Activated CD4-positive, alpha-beta T cell treated with anti-CD3 and anti-CD28 coated beads for 36 hours (primary cell): ENCODE measurements at regions of chr5 and their contacts with region 1.

Region 1: DNA sequence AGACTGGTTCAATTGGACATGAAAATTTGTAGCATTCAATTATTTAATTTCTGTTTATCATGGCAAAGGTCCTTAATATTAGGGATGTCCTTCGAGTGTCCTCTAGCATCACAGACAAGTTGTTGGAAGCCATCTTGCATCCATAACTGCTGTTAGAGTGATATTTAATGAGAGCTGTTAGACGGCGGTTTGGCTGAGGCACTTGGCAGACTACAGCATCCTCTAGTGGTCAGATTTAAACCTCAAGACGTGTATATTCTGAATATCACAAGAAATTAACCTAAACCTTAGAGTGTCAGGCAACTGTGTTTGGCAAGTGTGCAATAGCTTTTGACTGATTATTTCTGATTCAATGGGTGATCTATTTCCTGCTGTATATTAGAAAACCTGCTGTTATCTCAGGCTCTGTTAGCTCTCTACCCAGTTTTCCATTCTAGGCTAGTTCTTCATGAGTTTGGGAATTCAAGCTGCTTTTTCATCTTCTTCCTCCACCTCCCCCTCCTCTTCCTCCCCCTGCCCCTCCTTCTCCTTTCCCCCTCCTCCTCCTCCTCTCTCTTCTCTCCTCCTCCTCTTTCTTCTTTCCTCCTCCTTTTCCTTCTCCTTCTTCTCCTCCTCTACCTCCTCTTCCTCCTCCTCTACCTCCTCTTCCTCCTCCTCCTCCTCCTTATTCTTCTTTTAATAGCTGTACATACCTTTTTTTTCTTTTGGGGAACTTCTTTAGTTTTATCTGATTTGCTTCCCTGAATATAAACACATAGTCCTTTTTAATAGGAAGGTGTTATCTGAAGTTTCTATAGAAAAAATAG is 8.6 kb downstream of the SPINK1 start:
- DNase-seq: peak; percentile 56
- ATAC-seq: peak; percentile 80
- H3K4me3 Mint-ChIP-seq: no peak overlapping the region
- H3K27ac Mint-ChIP-seq: no peak overlapping the region
- H3K4me1 Mint-ChIP-seq: no peaks in the 10 kb centered on the region
- H3K27me3 Mint-ChIP-seq: peaks cover 2% of the 10 kb centered on the region

Region 2: GRCh38 chr5:147453875-147454814 is 368.7 kb before region 1 on chr5:
- CTCF ChIA-PET with region 1: interaction called, 3 read pairs
- POLR2A ChIA-PET with region 1: no interaction called
- intact Hi-C with region 1: loop called (anchors 1 to 5 kb)
- DNase-seq: peak; percentile 85
- ATAC-seq: peak; percentile 82
- H3K4me3 Mint-ChIP-seq: peak overlapping the region; percentile 69
- H3K27ac Mint-ChIP-seq: no peak overlapping the region
- H3K4me1 Mint-ChIP-seq: peaks cover 9% of the 10 kb centered on the region
- H3K27me3 Mint-ChIP-seq: peaks cover 72% of the 10 kb centered on the region

Region 3: GRCh38 chr5:147628058-147628895 is 194.6 kb before region 1 on chr5:
- CTCF ChIA-PET with region 1: interaction called, 108 read pairs
- POLR2A ChIA-PET with region 1: interaction called, 4 read pairs
- intact Hi-C with region 1: loop called (anchors 1 kb)
- DNase-seq: peak; percentile 66
- ATAC-seq: peak; percentile 63
- H3K4me3 Mint-ChIP-seq: no peak overlapping the region
- H3K27ac Mint-ChIP-seq: no peak overlapping the region
- H3K4me1 Mint-ChIP-seq: no peaks in the 10 kb centered on the region
- H3K27me3 Mint-ChIP-seq: no peaks in the 10 kb centered on the region

Region 4: DNA sequence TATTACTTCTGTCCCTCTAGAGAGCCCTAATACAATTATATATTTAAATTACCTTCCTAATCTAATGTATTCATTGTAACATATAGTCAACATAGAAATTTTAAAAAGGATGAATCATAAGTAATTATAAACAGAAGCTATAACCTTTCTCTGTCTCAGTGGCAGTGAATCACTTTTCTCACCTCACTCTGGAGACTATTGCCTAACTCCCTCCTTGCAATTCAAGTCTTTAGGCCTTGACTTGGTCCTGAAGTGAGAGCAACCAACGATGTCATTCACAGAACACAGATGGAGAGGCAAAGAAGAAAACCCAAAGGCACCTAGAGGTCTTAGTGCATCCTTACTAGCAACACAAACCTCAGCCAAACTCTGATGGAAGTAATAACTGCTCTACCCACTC is 179.7 kb before region 1 on chr5:
- CTCF ChIA-PET with region 1: interaction called, 13 read pairs
- POLR2A ChIA-PET with region 1: no interaction called
- intact Hi-C with region 1: no loop called
- DNase-seq: no peak
- ATAC-seq: no peak
- H3K4me3 Mint-ChIP-seq: no peak overlapping the region
- H3K27ac Mint-ChIP-seq: no peak overlapping the region
- H3K4me1 Mint-ChIP-seq: no peaks in the 10 kb centered on the region
- H3K27me3 Mint-ChIP-seq: no peaks in the 10 kb centered on the region

Region 5: GRCh38 chr5:148063861-148064260 is 241.0 kb after region 1 on chr5 and contains the start of gene SPINK5:
- CTCF ChIA-PET with region 1: no interaction called
- POLR2A ChIA-PET with region 1: no interaction called
- intact Hi-C with region 1: no loop called
- DNase-seq: no peak
- ATAC-seq: no peak
- H3K4me3 Mint-ChIP-seq: no peak within 1 kb of the TSS
- H3K27ac Mint-ChIP-seq: no peak within 1 kb of the TSS
- H3K4me1 Mint-ChIP-seq: no peaks in the 10 kb centered on the region
- H3K27me3 Mint-ChIP-seq: no peaks in the 10 kb centered on the region
- total RNA-seq, gene SPINK5: not detected